Breast epithelium (tissue), 4 donors: ENCODE measurements at regions of chr10 and their contacts with region 1.

Region 1: DNA sequence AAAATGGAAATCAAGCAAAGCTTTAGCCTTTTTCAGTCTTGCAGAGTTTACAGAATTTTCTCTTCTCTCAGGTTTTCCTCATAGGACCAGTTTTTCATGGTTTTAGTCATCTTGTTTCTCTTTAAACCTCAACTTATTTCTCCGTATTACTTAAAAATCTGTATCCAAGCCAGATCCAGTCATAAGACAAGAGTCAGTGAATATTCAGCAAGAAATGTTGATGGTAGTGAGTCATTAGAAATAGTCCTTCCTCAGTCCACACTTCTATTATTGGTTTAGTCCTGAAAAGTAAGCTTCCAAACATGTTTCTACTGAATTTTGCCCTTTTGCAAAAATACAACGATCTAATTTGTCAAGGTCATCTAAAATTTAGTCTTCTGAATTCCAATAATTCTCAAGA is 107.0 kb downstream of the VIM start:
- DNase-seq: no peak
- H3K4me3 ChIP-seq: no peak overlapping the region
- H3K27ac ChIP-seq: no peak overlapping the region
- H3K4me1 ChIP-seq: no peaks in the 10 kb centered on the region
- H3K27me3 ChIP-seq: no peaks in the 10 kb centered on the region
- CTCF ChIP-seq: no peak
- POLR2A ChIP-seq: no peak

Region 2: GRCh38 chr10:16656895-16657294 is 678.2 kb before region 1 on chr10:
- intact Hi-C with region 1: loop called (anchors 5 kb)
- DNase-seq: no peak
- H3K4me3 ChIP-seq: no peak overlapping the region
- H3K27ac ChIP-seq: no peak overlapping the region
- H3K4me1 ChIP-seq: no peaks in the 10 kb centered on the region
- H3K27me3 ChIP-seq: no peaks in the 10 kb centered on the region
- CTCF ChIP-seq: no peak
- POLR2A ChIP-seq: no peak

Region 3: DNA sequence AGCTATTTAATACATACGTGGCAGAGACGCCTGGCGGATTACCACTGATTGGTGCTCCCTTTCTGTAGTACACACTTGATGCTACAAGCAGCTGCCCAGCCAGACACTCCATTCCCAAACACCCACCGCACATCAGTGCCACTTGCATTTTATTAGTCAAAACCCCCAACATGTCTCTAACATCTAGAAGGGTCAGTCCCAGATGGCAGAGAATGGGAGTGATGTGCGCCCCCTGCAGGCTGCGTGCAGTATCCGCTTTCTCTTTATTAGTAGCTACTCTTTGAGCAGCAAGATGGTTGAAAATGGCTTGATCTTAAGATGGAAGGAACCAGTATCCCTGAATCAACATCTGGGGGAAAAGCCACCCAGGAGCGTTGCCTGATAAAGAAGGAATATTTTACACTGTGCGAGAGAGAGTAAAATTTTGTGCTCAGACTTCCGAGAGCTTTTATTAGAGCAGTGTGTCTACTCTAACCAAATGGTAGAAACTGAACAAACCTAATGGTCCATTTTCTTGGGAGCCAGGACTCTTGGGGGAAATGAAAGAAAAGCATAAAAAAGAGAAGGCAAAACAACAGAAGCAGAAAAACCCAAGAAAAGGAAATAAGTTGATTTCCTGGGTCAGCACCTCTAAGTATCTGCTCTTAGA is 41.0 kb after region 1 on chr10:
- intact Hi-C with region 1: no loop called
- DNase-seq: no peak
- H3K4me3 ChIP-seq: no peak overlapping the region
- H3K27ac ChIP-seq: no peak overlapping the region
- H3K4me1 ChIP-seq: no peaks in the 10 kb centered on the region
- H3K27me3 ChIP-seq: no peaks in the 10 kb centered on the region
- CTCF ChIP-seq: no peak
- POLR2A ChIP-seq: no peak

Region 4: DNA sequence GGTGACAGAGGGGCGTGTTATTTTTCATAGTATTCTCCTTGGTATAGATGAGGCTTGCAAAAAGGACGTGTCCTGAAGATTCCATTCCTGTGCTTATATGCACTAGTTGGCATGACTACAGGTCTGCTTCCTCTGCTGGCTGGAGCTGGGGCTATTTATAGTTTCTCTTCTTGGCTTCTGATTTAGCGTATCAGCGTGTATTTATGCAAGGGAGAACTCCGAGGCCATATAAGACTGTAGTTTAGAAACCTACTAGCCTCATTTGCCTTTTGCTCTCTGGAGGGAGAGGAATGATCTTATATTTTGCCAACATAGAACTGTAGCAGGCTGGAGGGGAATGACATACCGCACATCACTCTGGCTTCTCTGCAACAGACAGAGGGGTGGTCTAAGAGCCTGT is 844.8 kb after region 1 on chr10:
- intact Hi-C with region 1: loop called (anchors 5 kb)
- DNase-seq: no peak
- H3K4me3 ChIP-seq: no peak overlapping the region
- H3K27ac ChIP-seq: no peak overlapping the region
- H3K4me1 ChIP-seq: no peaks in the 10 kb centered on the region
- H3K27me3 ChIP-seq: no peaks in the 10 kb centered on the region
- CTCF ChIP-seq: no peak
- POLR2A ChIP-seq: no peak